Adrenal gland (tissue), 19 donors: ENCODE measurements at regions of chr10 and their contacts with region 1.

Region 1: DNA sequence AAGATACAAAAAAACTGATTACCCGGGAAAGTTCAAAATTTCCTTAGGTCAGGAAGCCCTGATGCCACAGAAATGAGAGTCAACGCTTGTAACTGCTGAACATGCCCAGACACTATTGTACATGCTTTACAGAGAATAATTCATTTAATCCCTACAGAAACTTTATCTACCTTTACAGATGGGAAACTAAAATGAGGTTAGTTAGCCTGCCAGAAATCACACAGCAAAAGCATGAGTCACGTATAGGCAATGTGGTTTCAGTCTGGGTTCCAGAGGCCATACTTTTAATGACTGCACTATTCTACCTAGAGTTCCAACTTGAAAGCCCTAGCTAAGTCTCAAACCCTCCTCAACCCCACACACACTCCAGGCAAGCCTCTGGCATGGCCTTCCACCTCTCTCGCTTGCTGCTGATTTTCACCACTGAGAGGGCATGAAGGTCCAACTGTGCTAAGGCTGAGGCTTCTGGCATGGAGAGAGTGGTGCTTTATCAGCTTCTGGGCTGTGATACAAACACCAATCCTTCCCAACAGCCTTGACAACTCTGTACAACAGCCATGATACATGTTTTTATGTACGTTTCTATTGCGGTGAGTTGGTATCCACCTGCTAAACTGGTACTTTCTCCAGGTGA is 1011.2 kb upstream of the GHITM start:
- DNase-seq: no peak
- H3K4me3 ChIP-seq: no peak overlapping the region
- H3K27ac ChIP-seq: no peak overlapping the region
- H3K4me1 ChIP-seq: no peaks in the 10 kb centered on the region
- H3K27me3 ChIP-seq: no peaks in the 10 kb centered on the region
- CTCF ChIP-seq: no peak
- POLR2A ChIP-seq: no peak

Region 2: DNA sequence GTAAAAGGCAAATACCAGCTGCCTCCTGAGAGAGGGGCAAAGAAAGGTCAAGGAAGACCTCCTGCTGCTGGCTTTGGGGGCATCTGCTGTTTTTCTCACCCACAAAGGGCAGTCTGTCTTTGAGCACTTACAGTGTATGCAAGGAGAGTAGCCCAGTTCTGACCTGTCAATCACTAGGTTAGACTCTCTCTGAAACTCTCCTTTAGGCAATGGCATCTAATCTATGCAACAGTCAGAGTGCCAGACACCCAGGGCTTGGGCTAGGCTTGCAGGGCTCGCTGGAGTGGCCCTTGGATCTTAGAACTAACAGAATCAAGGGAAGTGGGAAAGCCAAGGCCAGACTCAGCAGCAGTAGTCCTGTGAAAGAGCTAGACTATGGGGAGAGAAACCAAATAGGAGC is 730.2 kb before region 1 on chr10:
- intact Hi-C with region 1: loop called in 1 of 2 experiments (anchors 5 kb)
- DNase-seq: no peak
- H3K4me3 ChIP-seq: no peak overlapping the region
- H3K27ac ChIP-seq: no peak overlapping the region
- H3K4me1 ChIP-seq: no peaks in the 10 kb centered on the region
- H3K27me3 ChIP-seq: no peaks in the 10 kb centered on the region
- CTCF ChIP-seq: no peak
- POLR2A ChIP-seq: no peak

Region 3: GRCh38 chr10:82683931-82684340 is 444.1 kb before region 1 on chr10:
- intact Hi-C with region 1: no loop called
- DNase-seq: no peak
- H3K4me3 ChIP-seq: no peak overlapping the region
- H3K27ac ChIP-seq: no peak overlapping the region
- H3K4me1 ChIP-seq: peaks cover 5 to 8% of the 10 kb centered on the region in 2 donors
- H3K27me3 ChIP-seq: no peaks in the 10 kb centered on the region
- CTCF ChIP-seq: no peak
- POLR2A ChIP-seq: no peak